IMR-90 (cell line): ENCODE measurements at regions of chr1 and their contacts with region 1.

Region 1: GRCh38 chr1:196977278-196977677 is at the start of gene CFHR5:
- DNase-seq: no peak
- ATAC-seq: no peak
- H3K4me3 ChIP-seq: no peak within 1 kb of the TSS
- H3K27ac ChIP-seq: no peak within 1 kb of the TSS
- H3K4me1 ChIP-seq: no peaks in the 10 kb centered on the region
- H3K27me3 ChIP-seq: no peaks in the 10 kb centered on the region
- CTCF ChIP-seq: no peak
- POLR2A ChIP-seq: no peak
- RAD21 ChIP-seq: no peak
- total RNA-seq, gene CFHR5: not detected in 2 replicates

Region 2: GRCh38 chr1:196997423-196997822 is 20.1 kb after region 1 on chr1:
- CTCF ChIA-PET with region 1: no interaction called
- POLR2A ChIA-PET with region 1: no interaction called
- dilution Hi-C with region 1: no loop called
- in situ Hi-C with region 1: no loop called
- intact Hi-C with region 1: loop called (anchors 2 kb)
- DNase-seq: peak; percentile 56
- ATAC-seq: peak; percentile 89
- H3K4me3 ChIP-seq: no peak overlapping the region
- H3K27ac ChIP-seq: no peak overlapping the region
- H3K4me1 ChIP-seq: no peaks in the 10 kb centered on the region
- H3K27me3 ChIP-seq: no peaks in the 10 kb centered on the region
- CTCF ChIP-seq: no peak
- POLR2A ChIP-seq: no peak
- RAD21 ChIP-seq: no peak

Region 3: DNA sequence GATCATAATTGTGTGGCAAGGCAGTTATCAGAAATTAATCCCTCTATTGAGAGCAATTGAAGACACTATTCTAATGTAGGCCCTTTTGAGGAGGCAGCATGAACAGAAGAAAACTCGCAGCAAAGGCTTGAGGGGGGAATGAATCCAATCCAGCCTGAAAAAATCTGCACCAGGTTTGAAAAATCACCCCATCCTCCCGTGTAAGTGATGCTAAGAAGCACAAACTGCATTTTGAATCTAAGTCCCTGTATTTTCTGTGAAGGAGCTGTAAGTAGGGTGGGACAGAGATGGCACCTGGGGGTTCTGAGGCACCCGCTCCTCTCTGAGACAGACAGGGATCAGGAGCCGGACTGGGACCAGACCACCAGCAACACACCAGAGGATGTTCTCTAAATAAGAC is 290.7 kb after region 1 on chr1 and contains the start of gene CRB1:
- CTCF ChIA-PET with region 1: no interaction called
- POLR2A ChIA-PET with region 1: no interaction called
- dilution Hi-C with region 1: no loop called
- in situ Hi-C with region 1: no loop called
- intact Hi-C with region 1: no loop called
- DNase-seq: no peak
- ATAC-seq: no peak
- H3K4me3 ChIP-seq: no peak within 1 kb of the TSS
- H3K27ac ChIP-seq: no peak within 1 kb of the TSS
- H3K4me1 ChIP-seq: no peaks in the 10 kb centered on the region
- H3K27me3 ChIP-seq: no peaks in the 10 kb centered on the region
- CTCF ChIP-seq: no peak
- POLR2A ChIP-seq: no peak
- RAD21 ChIP-seq: no peak
- total RNA-seq, gene CRB1: under 0.01 TPM in 1 of 2 replicates, not detected in the other